ENCODE measurements at regions of chr1 and their contacts with region 1.

Region 1: GRCh38 chr1:228486596-228487335 is 416 bp upstream of the RNF187 start:
- H3K4me3 Mint-ChIP-seq: peak overlapping the region; percentile 88
- H3K27ac Mint-ChIP-seq: peak overlapping the region; percentile 100
- H3K4me1 Mint-ChIP-seq: peaks cover 41% of the 10 kb centered on the region
- H3K27me3 Mint-ChIP-seq: peaks cover 3% of the 10 kb centered on the region

Region 2: GRCh38 chr1:227787513-227788270 is 699.1 kb before region 1 on chr1:
- intact Hi-C with region 1: loop called (anchors 5 kb)
- H3K4me3 Mint-ChIP-seq: peak overlapping the region; percentile 79
- H3K27ac Mint-ChIP-seq: peak overlapping the region; percentile 69
- H3K4me1 Mint-ChIP-seq: peaks cover 28% of the 10 kb centered on the region
- H3K27me3 Mint-ChIP-seq: peaks cover 54% of the 10 kb centered on the region

Region 3: GRCh38 chr1:228109073-228109961 is 377.4 kb before region 1 on chr1 and contains the start of gene MRPL55:
- intact Hi-C with region 1: loop called (anchors 10 kb)
- H3K4me3 Mint-ChIP-seq: peak within 1 kb of the TSS; percentile 92
- H3K27ac Mint-ChIP-seq: peak within 1 kb of the TSS; percentile 90
- H3K4me1 Mint-ChIP-seq: peaks cover 52% of the 10 kb centered on the region
- H3K27me3 Mint-ChIP-seq: no peaks in the 10 kb centered on the region

Region 4: GRCh38 chr1:228139944-228140656 is 346.7 kb before region 1 on chr1 and contains the start of gene GUK1:
- intact Hi-C with region 1: loop called (anchors 10 kb)
- H3K4me3 Mint-ChIP-seq: peak within 1 kb of the TSS; percentile 82
- H3K27ac Mint-ChIP-seq: peak within 1 kb of the TSS; percentile 87
- H3K4me1 Mint-ChIP-seq: peaks cover 41% of the 10 kb centered on the region
- H3K27me3 Mint-ChIP-seq: no peaks in the 10 kb centered on the region

Region 5: GRCh38 chr1:228165372-228166169 is 321.2 kb before region 1 on chr1 and contains the start of gene IBA57:
- intact Hi-C with region 1: loop called (anchors 5 kb)
- H3K4me3 Mint-ChIP-seq: peak within 1 kb of the TSS; percentile 83
- H3K27ac Mint-ChIP-seq: peak within 1 kb of the TSS; percentile 91
- H3K4me1 Mint-ChIP-seq: peaks cover 71% of the 10 kb centered on the region
- H3K27me3 Mint-ChIP-seq: peaks cover 21% of the 10 kb centered on the region

Region 6: GRCh38 chr1:228445843-228446650 is 40.7 kb before region 1 on chr1:
- intact Hi-C with region 1: no loop called
- H3K4me3 Mint-ChIP-seq: peak overlapping the region; percentile 68
- H3K27ac Mint-ChIP-seq: no peak overlapping the region
- H3K4me1 Mint-ChIP-seq: peaks cover 14% of the 10 kb centered on the region
- H3K27me3 Mint-ChIP-seq: peaks cover 76% of the 10 kb centered on the region

Region 7: GRCh38 chr1:228457396-228458176 is 29.2 kb before region 1 on chr1:
- intact Hi-C with region 1: loop called (anchors 2 kb)
- H3K4me3 Mint-ChIP-seq: peak overlapping the region; percentile 84
- H3K27ac Mint-ChIP-seq: peak overlapping the region; percentile 93
- H3K4me1 Mint-ChIP-seq: peaks cover 31% of the 10 kb centered on the region
- H3K27me3 Mint-ChIP-seq: peaks cover 42% of the 10 kb centered on the region

Region 8: DNA sequence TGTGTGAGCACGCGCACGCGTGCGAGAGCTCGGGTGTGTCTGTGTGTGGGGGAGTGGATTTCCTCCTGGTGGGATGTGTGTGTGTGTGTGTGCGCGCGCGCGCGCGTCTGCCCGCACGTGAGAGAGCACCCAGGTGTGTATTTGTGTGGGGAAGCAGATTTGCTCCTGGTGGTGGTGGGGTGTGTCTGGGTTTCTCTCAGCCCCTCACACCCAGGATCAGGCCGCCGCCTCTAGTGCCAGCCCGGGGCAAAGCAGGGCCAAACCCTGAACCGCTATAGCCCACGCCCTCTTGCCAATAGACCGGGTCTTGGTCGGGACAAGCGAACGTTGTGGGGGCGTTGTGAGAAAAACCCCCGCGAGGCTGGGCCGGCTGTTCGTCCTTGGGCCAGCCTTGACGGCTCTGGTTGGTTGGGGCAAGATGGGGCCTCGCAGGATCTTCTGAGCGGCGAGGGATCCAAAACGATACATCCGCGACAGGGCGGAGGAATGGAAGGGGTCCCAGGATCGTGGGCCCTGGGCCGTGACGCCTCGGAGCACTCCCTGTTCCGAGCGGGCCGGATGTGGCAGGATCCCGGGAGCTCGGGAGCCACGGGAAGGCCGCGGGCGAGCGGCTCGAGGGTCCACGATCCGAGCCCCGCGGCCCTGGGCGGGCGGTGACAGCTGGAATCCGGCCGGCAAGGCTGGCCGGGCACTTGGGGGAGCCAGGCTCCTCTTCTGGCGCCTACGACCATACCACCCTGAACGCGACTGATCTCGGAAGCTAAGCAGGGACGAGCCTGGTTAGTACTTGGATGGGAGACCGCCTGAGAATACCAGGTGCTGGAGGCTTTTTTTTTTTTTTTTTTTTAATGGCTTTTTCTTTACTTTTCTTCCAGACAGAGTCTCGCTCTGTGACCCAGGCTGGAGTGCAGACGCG is 68.6 kb after region 1 on chr1:
- intact Hi-C with region 1: no loop called
- H3K4me3 Mint-ChIP-seq: no peak overlapping the region
- H3K27ac Mint-ChIP-seq: no peak overlapping the region
- H3K4me1 Mint-ChIP-seq: no peaks in the 10 kb centered on the region
- H3K27me3 Mint-ChIP-seq: peaks cover 14% of the 10 kb centered on the region

Region 9: DNA sequence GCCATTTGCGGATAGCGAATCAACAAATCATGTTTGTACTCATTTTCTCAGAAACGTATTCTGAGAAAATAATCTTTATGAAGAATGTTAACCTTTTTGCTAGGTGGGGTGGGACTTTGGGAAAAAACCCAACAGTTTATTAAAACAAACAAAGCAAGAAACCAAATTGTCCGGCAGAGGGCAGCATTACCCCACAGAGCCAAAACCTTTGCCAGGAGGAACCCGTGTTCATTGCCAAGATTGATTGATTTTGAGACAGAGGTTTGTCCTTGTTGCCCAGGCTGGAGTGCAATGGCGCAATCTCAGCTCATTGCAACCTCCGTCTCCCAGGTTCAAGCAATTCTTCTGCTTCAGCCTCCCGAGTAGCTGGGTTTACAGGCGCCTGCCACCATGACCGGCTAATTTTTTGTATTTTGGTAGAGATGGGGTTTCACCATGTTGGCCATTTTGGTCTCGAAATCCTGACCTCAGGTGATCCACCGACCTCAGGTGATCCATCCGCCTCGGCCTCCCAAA is 177.7 kb after region 1 on chr1:
- intact Hi-C with region 1: no loop called
- H3K4me3 Mint-ChIP-seq: no peak overlapping the region
- H3K27ac Mint-ChIP-seq: no peak overlapping the region
- H3K4me1 Mint-ChIP-seq: peaks cover 7% of the 10 kb centered on the region
- H3K27me3 Mint-ChIP-seq: peaks cover 20% of the 10 kb centered on the region